ENCODE measurements at regions of chr15 and their contacts with region 1.

Region 1: DNA sequence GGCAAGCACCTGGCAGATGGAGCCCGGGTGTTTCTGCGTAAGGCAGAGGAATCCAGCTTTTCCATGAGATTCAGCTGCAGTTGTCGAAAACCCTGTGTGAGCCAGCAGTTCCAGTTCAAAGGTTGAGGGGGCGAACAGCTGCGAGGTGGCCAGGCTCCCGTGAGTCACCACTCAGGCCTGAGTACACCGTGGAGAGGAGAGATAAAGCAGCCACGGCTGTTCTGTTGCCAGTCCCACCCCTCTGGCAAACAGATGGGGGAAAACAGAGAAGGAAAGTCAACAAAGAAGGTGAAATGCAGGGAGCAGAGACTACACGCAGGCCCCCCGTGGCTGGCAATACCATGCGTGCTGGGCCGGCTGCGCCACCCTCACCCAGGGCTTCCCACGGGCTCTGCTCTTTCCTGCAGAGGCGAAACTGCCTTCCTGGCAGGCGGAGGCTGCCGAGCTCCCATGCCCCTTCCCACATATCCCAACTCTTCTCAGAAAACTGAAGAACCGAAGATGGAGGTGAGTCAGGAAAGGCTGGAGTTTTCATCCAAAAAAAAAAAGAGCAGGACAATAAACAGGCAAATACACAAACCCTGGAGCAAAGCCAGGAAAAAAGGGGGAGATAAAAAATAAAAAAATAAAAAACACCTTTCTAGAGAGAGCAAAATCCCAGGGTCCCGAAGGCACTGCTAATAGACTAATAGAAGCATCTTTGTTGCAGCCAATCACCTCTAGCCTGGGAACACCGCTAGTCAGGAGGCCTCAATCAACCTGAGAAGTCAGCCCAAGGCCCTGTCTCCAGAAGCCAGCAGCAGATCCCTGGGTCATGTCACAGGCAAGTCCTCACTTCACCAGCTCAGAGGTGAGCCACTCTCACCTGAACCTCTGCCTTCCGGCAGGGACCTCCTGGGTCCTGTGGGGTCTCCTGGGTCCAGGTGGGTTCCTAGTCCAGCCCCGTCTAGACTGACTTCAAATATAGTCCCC is 37.7 kb downstream of the FAM174B start:
- DNase-seq: no peak
- ATAC-seq: peak; percentile 88

Region 2: DNA sequence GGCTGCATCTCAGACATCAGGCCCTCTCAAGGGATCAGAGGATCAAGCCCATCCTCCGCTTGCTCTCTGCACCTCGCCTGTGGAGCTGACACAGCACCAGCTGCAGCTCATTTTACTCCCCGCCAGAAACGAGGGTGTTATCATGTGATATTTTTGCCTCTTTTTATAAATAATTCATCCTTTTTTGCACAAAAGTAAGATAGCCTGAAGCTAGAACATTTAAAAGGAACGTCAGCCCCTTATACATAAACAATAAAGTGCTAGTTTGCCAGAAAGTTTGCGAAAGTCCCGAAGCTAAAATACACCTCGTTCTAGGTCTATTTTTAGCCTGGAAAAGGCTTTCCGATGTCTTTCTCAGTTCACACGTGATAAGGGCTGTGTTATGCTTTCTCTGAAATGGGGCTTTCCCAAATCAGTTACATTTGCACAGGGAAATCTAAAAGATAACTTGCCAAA is 47.3 kb after region 1 on chr15:
- intact Hi-C with region 1: no loop called
- DNase-seq: no peak
- ATAC-seq: peak; percentile 46

Region 3: DNA sequence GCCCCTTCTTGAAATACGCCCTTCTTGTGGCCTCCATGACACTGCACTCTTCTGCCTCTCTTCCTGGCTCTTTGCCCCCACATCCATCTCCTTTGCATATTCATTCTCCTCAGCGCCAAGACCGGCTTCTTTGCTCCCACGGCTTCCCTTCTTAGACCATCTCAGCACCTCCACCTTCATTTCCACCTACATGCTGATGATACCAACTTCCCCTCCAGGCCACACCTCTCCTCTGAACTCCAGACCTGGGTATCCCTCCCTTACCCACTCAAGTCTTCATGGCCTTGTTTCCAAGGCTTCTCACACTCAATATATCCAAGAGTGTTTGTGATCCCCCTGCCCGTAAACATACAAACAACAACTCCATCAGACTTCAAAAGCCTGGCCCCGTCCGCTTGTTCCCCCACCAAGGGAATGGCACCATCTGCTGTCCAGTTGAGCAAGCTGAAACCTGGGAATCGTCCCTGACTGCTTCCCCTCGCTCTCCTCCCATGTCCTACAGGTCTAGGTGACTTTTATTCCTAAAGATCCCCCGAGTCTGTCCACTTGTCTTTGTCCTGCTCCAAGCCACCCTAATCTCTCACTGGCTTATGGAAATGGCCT is 65.5 kb after region 1 on chr15:
- intact Hi-C with region 1: loop called (anchors 5 kb)
- DNase-seq: no peak
- ATAC-seq: no peak

Region 4: DNA sequence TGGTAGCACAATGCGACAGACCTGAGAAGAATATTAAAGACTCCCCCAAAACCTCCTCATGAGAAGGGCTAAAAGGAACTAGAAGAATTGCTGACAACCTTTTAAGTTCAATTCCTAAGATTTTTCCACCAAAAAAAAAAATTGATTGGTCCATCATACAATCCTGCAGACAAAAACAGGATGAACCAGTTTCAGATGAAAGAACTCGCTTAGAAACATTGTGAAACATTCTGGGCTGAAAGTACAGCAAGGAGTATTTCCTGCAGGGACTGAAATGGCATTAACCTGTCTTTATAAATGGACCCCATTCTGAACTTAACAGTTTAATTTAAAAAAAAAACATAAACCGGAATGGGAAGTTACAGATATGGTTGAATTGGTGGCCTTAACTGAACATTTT is 133.7 kb after region 1 on chr15:
- intact Hi-C with region 1: no loop called
- DNase-seq: no peak
- ATAC-seq: no peak